ENCODE measurements at regions of chr16 and their contacts with region 1.

Region 1: DNA sequence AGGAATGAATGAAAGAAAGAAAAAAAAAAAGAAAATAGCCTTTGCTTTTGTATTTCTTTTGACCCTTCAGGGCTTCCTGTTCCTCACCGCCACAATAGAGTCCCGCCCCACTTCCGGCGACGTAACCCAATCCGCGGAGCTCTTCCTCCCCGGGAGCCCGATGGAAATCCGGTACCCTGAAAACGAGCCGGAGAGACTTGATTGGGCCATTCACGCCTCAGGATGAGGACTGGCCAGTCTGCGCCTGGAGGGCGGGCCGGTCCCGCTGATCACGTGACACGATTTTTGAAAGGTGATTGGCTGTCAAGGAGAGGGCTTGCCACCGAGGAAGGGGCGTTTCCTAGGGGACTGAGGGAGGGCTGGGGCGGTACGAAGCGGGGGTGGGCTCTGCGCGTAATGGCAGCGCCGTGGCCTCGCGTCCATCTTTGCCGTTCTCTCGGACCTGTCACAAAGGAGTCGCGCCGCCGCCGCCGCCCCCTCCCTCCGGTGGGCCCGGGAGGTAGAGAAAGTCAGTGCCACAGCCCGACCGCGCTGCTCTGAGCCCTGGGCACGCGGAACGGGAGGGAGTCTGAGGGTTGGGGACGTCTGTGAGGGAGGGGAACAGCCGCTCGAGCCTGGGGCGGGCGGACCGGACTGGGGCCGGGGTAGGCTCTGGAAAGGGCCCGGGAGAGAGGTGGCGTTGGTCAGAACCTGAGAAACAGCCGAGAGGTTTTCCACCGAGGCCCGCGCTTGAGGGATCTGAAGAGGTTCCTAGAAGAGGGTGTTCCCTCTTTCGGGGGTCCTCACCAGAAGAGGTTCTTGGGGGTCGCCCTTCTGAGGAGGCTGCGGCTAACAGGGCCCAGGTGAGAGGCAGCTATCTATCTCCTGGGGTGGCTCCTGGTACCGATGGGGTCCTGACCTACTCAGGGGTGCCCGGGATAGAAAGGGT is at the starts of genes PSME3IP1 and RSPRY1:
- DNase-seq: peak; percentile 99
- H3K4me3 Mint-ChIP-seq: peak within 1 kb of the TSS; percentile 93
- H3K27ac Mint-ChIP-seq: peak within 1 kb of the TSS; percentile 87
- H3K4me1 Mint-ChIP-seq: peaks cover 23% of the 10 kb centered on the region
- H3K27me3 Mint-ChIP-seq: no peaks in the 10 kb centered on the region
- CTCF ChIP-seq: no peak
- total RNA-seq, gene PSME3IP1: 171 and 177 TPM in 2 replicates
- total RNA-seq, gene RSPRY1: 43.6 and 47.4 TPM in 2 replicates

Region 2: GRCh38 chr16:57283214-57283957 is 97.2 kb after region 1 on chr16:
- CTCF ChIA-PET with region 1: no interaction called
- intact Hi-C with region 1: loop called (anchors 2 kb)
- DNase-seq: peak; percentile 49
- H3K4me3 Mint-ChIP-seq: peak overlapping the region; percentile 75
- H3K27ac Mint-ChIP-seq: peak overlapping the region; percentile 49
- H3K4me1 Mint-ChIP-seq: peaks cover 45% of the 10 kb centered on the region
- H3K27me3 Mint-ChIP-seq: no peaks in the 10 kb centered on the region
- CTCF ChIP-seq: no peak

Measured in Calu3 (cell line).